ENCODE measurements at regions of chr18 and their contacts with region 1.

Region 1: DNA sequence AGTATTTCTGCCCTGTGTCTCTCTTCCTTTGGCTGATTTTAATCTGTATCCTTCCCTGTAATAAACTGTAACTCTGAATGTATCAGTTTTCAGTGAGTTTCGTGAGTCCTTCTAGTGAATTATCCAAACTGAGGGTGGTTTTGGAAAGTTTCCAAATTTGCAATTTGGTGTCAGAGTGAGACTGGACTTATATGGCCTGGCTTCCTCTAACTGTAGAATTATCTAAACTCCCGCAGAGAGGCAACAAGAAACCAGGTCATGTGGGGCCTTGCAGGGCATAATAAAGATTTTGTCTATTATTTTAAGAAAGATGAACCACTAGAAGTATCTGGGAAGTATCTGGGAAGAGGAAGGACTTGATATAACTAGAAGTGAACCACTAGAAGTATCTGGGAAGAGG is 95.3 kb upstream of the RNF152 start:
- DNase-seq: no peak
- H3K4me3 ChIP-seq: no peak overlapping the region
- H3K27me3 ChIP-seq: no peaks in the 10 kb centered on the region
- CTCF ChIP-seq: no peak

Region 2: DNA sequence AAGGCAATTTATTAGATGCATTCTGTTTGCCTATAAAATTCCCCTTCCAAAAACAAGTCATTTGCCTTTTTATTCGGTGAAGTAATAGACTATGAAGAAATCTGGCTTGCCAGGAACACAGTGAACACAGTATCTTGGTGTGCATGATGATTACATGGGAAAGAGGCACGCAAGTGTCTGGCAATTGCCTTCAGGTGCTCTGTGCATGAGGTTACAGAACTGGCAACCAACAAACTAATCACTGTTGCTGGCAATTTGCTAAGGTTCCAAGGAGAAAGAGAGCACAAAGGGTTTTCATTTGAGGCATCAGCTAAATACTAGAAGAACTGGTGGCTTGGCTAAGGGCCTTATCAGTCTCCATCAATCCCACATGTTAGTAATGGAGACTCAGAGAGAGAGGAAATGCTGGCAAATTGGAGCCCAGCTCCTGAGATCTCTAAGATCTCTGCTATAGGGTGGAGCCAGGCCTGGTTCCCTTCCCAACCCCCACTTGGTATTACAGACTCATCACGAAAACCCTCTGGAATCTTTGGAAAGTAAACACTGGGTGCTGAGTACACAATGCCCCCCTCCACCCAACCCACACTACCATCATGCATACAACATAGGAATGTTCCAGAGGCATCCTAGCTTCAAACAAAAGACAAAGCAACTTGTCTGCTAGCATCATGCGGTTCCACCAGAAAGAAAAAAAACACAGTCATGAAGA is 105.7 kb before region 1 on chr18:
- CTCF ChIA-PET with region 1: no interaction called
- POLR2A ChIA-PET with region 1: no interaction called
- DNase-seq: no peak
- H3K4me3 ChIP-seq: no peak overlapping the region
- H3K27me3 ChIP-seq: no peaks in the 10 kb centered on the region
- CTCF ChIP-seq: no peak

Region 3: GRCh38 chr18:61948281-61948741 is 39.8 kb before region 1 on chr18:
- CTCF ChIA-PET with region 1: no interaction called
- POLR2A ChIA-PET with region 1: interaction called, 15 read pairs
- DNase-seq: no peak
- H3K4me3 ChIP-seq: no peak overlapping the region
- H3K27me3 ChIP-seq: no peaks in the 10 kb centered on the region
- CTCF ChIP-seq: no peak

Measured in BJ (cell line).